ENCODE measurements at regions of chr2 and their contacts with region 1.

Region 1: GRCh38 chr2:190880378-190881073 is at the start of gene GLS:
- DNase-seq: peak; percentile 95
- H3K4me3 Mint-ChIP-seq: peak within 1 kb of the TSS; percentile 91
- H3K27ac Mint-ChIP-seq: peak within 1 kb of the TSS; percentile 97
- H3K4me1 Mint-ChIP-seq: peaks cover 35% of the 10 kb centered on the region
- H3K27me3 Mint-ChIP-seq: no peaks in the 10 kb centered on the region
- total RNA-seq, gene GLS: 195 and 201 TPM in 2 replicates

Region 2: DNA sequence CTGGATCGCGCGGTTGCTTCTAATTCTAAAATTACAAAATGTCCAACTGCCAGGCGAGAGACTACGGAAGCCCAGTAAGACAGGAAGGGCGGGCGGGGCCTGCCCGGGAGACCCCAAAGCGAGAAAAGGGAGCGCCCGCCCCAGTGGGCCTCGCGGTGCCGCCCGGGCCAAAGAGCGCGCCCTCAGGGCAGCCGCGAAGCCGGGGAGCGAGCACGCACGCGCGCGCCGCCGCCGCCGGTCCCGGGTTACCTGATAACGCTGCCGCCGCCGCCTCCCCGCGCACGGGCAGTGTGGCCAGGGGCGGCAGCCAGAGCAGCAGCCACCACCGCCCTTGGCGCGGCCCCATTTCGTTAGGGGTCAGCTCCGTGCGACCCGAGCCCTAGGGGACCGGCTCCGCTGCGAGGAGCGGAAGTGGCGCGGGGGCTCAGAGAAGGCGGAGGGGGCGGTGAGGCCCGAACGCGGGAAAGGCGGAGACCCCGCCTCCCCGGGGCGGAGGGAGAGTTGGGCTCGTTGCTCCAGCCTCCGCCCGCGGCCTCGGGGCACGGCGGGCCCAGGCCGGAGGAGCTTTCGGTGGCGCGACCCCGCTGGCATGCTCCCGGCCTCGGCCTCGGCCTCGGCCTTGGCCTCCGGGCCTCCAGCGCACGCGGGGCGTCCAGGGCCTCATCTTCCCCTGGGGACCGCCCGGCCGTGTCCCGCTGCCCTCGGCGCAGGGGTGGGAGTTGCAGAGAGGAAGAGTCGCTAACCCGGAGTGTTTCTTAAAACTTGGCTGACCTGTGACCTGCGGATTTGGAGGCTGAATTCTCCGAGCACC is 346.0 kb before region 1 on chr2 and contains the start of gene NEMP2:
- intact Hi-C with region 1: loop called (anchors 5 kb)
- DNase-seq: peak; percentile 84
- H3K4me3 Mint-ChIP-seq: peak within 1 kb of the TSS; percentile 95
- H3K27ac Mint-ChIP-seq: peak within 1 kb of the TSS; percentile 98
- H3K4me1 Mint-ChIP-seq: peaks cover 48% of the 10 kb centered on the region
- H3K27me3 Mint-ChIP-seq: no peaks in the 10 kb centered on the region
- total RNA-seq, gene NEMP2: 15.2 and 15.5 TPM in 2 replicates

Region 3: GRCh38 chr2:190791347-190791975 is 89.1 kb before region 1 on chr2:
- intact Hi-C with region 1: loop called (anchors 2 kb)
- DNase-seq: no peak
- H3K4me3 Mint-ChIP-seq: peak overlapping the region; percentile 15
- H3K27ac Mint-ChIP-seq: peak overlapping the region; percentile 75
- H3K4me1 Mint-ChIP-seq: peaks cover 65% of the 10 kb centered on the region
- H3K27me3 Mint-ChIP-seq: no peaks in the 10 kb centered on the region

Region 4: GRCh38 chr2:190911813-190912212 is 31.3 kb after region 1 on chr2:
- intact Hi-C with region 1: loop called (anchors 1 kb)
- DNase-seq: no peak
- H3K4me3 Mint-ChIP-seq: no peak overlapping the region
- H3K27ac Mint-ChIP-seq: peak overlapping the region; percentile 53
- H3K4me1 Mint-ChIP-seq: peaks cover 42% of the 10 kb centered on the region
- H3K27me3 Mint-ChIP-seq: no peaks in the 10 kb centered on the region

Region 5: DNA sequence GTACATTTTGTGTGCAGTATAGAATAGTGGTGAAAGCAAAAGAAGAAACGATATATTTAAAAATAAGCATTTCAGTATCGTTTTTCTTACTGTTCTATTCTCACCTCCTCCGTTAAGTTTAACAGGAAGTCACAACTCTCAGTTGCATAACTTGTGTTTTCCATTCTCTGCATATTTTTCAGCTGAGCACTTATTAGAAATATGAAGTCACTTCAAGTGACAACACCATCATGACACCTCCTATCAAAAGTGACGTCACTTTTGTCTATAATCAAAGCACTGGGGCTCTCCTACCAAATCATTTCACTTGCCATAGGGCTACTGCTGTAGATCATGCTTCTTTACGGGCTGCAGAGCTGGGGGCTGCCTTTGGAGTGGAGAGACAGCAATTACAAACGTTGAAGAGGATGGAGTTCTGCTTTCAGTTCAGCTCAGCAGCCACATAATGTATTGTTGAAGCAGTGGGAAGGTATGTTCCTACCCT is 233.9 kb after region 1 on chr2:
- intact Hi-C with region 1: loop called (anchors 5 kb)
- DNase-seq: peak; percentile 40
- H3K4me3 Mint-ChIP-seq: peak overlapping the region; percentile 64
- H3K27ac Mint-ChIP-seq: peak overlapping the region; percentile 94
- H3K4me1 Mint-ChIP-seq: peaks cover 76% of the 10 kb centered on the region
- H3K27me3 Mint-ChIP-seq: no peaks in the 10 kb centered on the region

Region 6: DNA sequence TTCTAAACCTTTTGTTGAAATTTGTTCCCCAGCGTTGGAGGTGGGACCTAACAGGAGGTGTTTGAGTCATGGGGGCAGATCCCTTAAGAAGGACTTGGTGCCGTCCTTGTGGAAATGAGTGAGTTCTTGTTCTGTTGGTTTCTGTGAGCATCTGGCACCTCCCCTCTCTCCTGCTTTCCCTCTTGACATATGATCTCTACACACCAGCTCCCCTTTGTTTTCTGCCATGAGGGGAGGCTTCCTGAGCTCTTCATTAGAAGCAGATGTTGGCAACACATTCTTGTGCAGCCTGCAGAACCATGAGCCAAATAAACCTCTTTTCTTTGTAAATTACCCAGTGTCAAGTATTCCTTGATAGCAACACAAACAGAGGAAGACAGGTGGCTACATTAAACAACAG is 821.2 kb after region 1 on chr2:
- intact Hi-C with region 1: no loop called
- DNase-seq: no peak
- H3K4me3 Mint-ChIP-seq: no peak overlapping the region
- H3K27ac Mint-ChIP-seq: no peak overlapping the region
- H3K4me1 Mint-ChIP-seq: no peaks in the 10 kb centered on the region
- H3K27me3 Mint-ChIP-seq: no peaks in the 10 kb centered on the region